ENCODE measurements at regions of chr4 and their contacts with region 1.

Region 1: DNA sequence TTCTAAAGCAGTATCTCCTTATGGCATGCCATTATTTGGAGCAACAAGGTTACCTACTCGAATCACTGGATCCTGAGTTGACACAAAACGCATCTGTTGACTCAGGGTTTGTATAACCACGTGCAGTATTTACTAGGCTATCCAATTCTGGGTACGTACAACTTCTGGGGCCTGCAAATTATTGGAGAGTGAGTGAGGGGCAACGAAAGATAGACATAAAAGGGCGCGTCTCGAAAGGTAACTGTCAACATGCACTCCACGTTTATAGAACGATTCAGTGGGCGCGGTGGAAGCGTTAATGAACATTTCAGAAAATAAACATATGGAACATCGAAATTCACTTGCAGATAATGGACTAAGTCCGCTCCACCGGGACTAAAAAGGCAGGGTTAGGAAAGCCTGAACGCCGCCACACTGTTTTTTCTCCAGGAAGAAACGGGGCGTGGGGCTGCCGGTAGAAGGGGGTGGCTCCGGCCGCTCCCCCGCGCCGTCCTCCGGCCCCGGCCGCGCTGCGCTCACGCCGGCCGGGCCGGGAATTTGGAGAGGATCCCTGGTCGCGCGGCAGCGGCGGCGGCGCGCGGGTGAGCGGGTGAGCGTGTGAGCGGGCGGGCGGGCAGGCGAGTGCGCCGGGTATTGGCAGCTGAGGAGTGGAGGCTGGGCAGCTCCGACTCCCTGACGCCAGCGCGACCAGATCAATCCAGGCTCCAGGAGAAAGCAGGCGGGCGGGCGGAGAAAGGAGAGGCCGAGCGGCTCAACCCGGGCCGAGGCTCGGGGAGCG is at the start of gene SMAD1:
- DNase-seq: peak; percentile 83
- H3K4me3 ChIP-seq: peak within 1 kb of the TSS; percentile 83 to 97
- H3K27ac ChIP-seq: peak within 1 kb of the TSS; percentile 96 to 98
- H3K4me1 ChIP-seq: no peaks in the 10 kb centered on the region
- H3K27me3 ChIP-seq: no peaks in the 10 kb centered on the region
- CTCF ChIP-seq: peak in 2 of 4 experiments; percentile 10 to 16
- POLR2A ChIP-seq: peak; percentile 60
- total RNA-seq, gene SMAD1: 21.5 to 34.3 TPM

Region 2: GRCh38 chr4:145180298-145181090 is 300.9 kb before region 1 on chr4 and contains the start of gene OTUD4:
- intact Hi-C with region 1: loop called (anchors 5 kb)
- DNase-seq: peak; percentile 96
- H3K4me3 ChIP-seq: peak within 1 kb of the TSS; percentile 60 to 87
- H3K27ac ChIP-seq: peak within 1 kb of the TSS; percentile 95 to 96
- H3K4me1 ChIP-seq: no peaks in the 10 kb centered on the region
- H3K27me3 ChIP-seq: no peaks in the 10 kb centered on the region
- CTCF ChIP-seq: peak in 1 of 4 experiments; percentile 26
- POLR2A ChIP-seq: peak; percentile 69
- total RNA-seq, gene OTUD4: 22.2 to 43.2 TPM

Region 3: DNA sequence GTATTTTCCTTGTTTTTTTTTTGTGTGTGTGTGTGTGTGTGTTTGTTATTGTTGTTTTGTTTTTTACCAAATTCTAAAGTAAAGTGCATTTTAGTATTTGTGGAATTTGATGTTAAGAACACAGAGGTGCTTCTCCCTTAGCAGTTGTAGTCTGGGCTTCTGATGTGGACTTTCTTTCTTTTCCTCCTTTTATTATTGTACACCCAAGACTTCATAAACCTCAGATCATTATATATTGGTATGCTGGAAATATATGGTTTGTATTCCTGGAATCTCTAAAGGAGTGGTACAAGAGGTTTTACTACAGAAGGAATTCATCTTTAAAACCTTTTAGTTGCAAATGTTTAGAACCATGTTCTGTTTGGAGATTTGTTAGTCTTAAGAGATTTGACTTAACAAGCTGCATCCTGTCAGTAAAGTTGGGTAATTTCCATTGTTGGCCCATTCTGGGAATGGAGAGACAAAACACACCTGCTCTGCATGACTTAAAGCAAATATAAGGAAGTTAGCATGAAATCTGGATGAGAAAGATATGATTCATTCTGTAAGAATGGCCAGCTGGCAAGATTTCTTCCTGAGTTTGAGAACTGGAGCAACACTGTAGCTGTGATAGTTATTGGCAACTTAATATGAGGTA is 64.3 kb after region 1 on chr4:
- intact Hi-C with region 1: loop called (anchors 10 kb)
- DNase-seq: peak; percentile 79
- H3K4me3 ChIP-seq: no peak overlapping the region
- H3K27ac ChIP-seq: no peak overlapping the region
- H3K4me1 ChIP-seq: no peaks in the 10 kb centered on the region
- H3K27me3 ChIP-seq: no peaks in the 10 kb centered on the region
- CTCF ChIP-seq: no peak
- POLR2A ChIP-seq: no peak

Region 4: DNA sequence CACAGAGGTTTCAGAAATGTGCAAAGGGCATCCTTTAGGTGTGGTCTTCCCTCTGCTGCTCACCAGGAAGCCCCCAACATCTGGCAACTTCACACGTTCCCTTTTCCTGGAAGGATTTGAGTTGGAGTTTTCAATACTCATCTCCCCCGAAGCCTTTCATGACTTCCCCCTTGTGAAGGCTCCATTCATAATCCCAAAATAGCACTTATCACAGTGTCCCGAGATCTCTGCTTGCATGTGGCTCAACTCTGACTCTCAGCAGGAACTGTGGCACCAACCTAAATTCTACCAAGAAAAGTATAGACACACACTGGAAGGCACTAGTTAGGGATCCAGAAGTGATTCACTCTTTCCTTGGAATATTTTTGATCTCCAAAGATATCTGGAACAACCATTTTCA is 497.8 kb after region 1 on chr4:
- intact Hi-C with region 1: no loop called
- DNase-seq: no peak
- H3K4me3 ChIP-seq: no peak overlapping the region
- H3K27ac ChIP-seq: peak overlapping the region in 1 of 2 donors; percentile 40
- H3K4me1 ChIP-seq: peaks cover 2% of the 10 kb centered on the region
- H3K27me3 ChIP-seq: no peaks in the 10 kb centered on the region
- CTCF ChIP-seq: no peak
- POLR2A ChIP-seq: no peak